Activated CD8-positive, alpha-beta T cell treated with anti-CD3 and anti-CD28 coated beads, Interleukin-2, amount 10 ng/mL, durations not matched to agents 7 days and 5 days (primary cell): ENCODE measurements at regions of chr2 and their contacts with region 1.

Region 1: GRCh38 chr2:30208452-30208851 is 22.9 kb upstream of the LBH start:
- DNase-seq: peak; percentile 53
- ATAC-seq: peak; percentile 75
- H3K4me3 Mint-ChIP-seq: no peak overlapping the region
- H3K27ac Mint-ChIP-seq: peak overlapping the region; percentile 49
- H3K4me1 Mint-ChIP-seq: peaks cover 18% of the 10 kb centered on the region
- H3K27me3 Mint-ChIP-seq: peaks cover 8% of the 10 kb centered on the region

Region 2: DNA sequence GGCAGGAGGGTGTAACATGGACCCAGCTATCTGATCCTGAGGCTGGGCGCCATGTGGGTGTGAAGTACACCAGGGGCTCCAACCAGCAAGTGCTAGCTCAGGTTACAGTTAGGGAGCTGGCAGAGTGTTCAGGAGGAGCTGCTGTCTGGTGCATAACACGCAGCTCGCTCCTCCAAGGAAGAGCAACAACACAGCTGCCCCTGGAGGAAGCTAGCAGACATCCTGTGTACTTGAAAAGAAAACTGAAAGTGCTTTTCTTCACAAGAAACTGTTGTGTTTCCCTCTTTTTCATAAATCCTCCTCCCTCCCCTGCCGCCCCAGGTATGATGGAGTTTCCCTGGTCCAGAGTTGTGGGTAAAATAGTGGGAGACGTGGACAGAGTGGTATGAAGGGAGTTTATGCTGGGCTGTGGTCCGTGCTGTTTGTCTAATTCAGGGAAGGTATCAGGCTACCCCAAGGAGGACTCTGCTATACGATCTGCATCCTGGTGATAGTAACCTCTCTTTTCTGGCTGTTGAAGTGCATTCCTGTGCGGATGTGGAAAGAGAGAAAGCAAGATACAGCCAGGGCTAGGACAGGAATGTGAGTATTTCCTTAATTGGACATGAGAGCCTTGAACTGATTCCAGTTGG is 16.8 kb after region 1 on chr2:
- CTCF ChIA-PET with region 1: interaction called, 95 read pairs
- POLR2A ChIA-PET with region 1: interaction called, 4 read pairs
- DNase-seq: peak; percentile 70
- ATAC-seq: peak; percentile 88
- H3K4me3 Mint-ChIP-seq: peak overlapping the region; percentile 97
- H3K27ac Mint-ChIP-seq: peak overlapping the region; percentile 99
- H3K4me1 Mint-ChIP-seq: peaks cover 68% of the 10 kb centered on the region
- H3K27me3 Mint-ChIP-seq: peaks cover 2% of the 10 kb centered on the region

Region 3: DNA sequence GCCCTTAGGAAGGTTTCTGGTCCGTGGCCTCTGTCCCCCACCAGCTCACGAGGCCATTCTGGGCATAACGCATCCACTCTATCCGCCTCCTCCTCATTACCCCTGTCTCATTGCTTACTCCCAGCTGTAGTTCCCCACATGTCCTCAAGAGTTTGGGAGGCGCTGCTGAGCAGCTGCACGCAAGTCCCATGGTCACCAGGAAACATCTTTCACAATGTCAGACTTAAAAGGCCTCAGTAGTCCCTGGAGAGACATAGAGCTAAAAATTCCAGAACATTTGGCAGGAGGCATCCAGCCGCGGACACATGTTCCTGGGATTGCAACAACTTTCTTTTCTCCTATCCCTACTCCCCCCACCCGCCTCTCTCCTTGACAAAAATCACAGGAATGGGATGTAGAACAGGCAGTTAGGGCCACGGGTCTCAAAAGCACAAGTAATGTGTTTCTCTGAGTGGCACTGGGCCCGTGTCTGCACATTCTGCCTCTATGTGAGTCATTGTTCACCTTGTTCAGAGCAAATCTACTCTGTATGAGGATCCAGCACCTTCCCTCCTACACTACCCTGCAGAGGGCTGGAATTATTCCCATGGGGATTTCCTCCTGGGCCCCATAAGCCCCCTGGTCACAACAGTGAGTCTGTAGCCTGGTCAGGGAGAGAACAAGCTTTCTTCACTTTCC is 31.0 kb after region 1 on chr2:
- CTCF ChIA-PET with region 1: interaction called, 82 read pairs
- POLR2A ChIA-PET with region 1: interaction called, 13 read pairs
- DNase-seq: peak; percentile 82
- ATAC-seq: peak; percentile 42
- H3K4me3 Mint-ChIP-seq: peak overlapping the region; percentile 46
- H3K27ac Mint-ChIP-seq: peak overlapping the region; percentile 82
- H3K4me1 Mint-ChIP-seq: peaks cover 88% of the 10 kb centered on the region
- H3K27me3 Mint-ChIP-seq: no peaks in the 10 kb centered on the region

Region 4: DNA sequence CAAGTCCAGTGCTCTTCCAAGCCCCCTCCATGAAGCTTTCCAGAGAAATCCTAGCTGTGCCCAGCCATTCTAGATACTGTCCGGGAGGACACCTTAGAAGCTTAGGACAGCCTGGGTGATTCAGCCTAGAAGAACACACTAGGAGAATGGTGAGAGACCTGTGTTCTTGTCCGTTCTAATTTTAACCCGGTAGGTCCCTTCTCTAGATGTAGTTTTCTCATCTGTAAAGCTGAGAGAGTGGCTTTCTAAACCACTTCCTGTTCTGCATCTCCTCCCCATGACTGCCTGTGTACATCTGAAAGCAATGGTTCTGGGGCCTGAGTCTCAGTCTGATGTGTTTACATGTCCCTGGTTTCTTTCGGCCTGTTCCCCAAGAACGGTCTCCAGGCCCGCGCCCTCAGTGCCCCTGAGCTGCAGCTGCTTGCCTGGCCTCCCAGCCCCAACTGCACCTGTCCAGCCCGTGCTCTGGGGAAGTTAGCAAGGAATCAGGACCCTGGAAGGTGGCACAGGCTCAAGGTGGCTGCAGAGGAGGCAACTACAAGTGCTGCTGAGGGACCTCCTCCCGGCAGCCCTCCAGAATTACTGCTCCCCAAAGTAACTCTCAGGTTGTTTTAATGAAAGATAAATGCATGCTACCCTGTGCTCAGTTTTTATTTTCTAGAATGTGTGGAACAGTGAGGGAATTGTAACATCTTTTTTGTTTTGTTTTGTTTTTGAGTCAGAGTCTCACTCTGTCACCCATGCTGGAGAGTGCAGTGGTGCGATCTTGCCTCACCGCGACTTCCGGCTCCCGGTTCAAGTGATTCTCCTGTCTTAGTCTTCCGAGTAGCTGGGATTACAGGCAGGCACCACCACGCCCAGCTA is 128.8 kb after region 1 on chr2:
- CTCF ChIA-PET with region 1: interaction called, 39 read pairs
- POLR2A ChIA-PET with region 1: no interaction called
- DNase-seq: peak; percentile 76
- ATAC-seq: peak; percentile 94
- H3K4me3 Mint-ChIP-seq: peak overlapping the region; percentile 71
- H3K27ac Mint-ChIP-seq: peak overlapping the region; percentile 97
- H3K4me1 Mint-ChIP-seq: peaks cover 69% of the 10 kb centered on the region
- H3K27me3 Mint-ChIP-seq: no peaks in the 10 kb centered on the region

Region 5: GRCh38 chr2:30447149-30448045 is 238.9 kb after region 1 on chr2 and contains the start of gene LCLAT1:
- CTCF ChIA-PET with region 1: interaction called, 21 read pairs
- POLR2A ChIA-PET with region 1: no interaction called
- DNase-seq: peak; percentile 86
- ATAC-seq: peak; percentile 95
- H3K4me3 Mint-ChIP-seq: peak within 1 kb of the TSS; percentile 93
- H3K27ac Mint-ChIP-seq: peak within 1 kb of the TSS; percentile 97
- H3K4me1 Mint-ChIP-seq: peaks cover 27% of the 10 kb centered on the region
- H3K27me3 Mint-ChIP-seq: no peaks in the 10 kb centered on the region
- total RNA-seq, gene LCLAT1: 25.1 to 25.3 TPM

Region 6: GRCh38 chr2:30702694-30703093 is 494.2 kb after region 1 on chr2:
- CTCF ChIA-PET with region 1: interaction called, 69 read pairs
- POLR2A ChIA-PET with region 1: no interaction called
- DNase-seq: no peak
- ATAC-seq: no peak
- H3K4me3 Mint-ChIP-seq: no peak overlapping the region
- H3K27ac Mint-ChIP-seq: no peak overlapping the region
- H3K4me1 Mint-ChIP-seq: no peaks in the 10 kb centered on the region
- H3K27me3 Mint-ChIP-seq: no peaks in the 10 kb centered on the region